GM23248 (cell line): ENCODE measurements at regions of chr12 and their contacts with region 1.

Region 1: DNA sequence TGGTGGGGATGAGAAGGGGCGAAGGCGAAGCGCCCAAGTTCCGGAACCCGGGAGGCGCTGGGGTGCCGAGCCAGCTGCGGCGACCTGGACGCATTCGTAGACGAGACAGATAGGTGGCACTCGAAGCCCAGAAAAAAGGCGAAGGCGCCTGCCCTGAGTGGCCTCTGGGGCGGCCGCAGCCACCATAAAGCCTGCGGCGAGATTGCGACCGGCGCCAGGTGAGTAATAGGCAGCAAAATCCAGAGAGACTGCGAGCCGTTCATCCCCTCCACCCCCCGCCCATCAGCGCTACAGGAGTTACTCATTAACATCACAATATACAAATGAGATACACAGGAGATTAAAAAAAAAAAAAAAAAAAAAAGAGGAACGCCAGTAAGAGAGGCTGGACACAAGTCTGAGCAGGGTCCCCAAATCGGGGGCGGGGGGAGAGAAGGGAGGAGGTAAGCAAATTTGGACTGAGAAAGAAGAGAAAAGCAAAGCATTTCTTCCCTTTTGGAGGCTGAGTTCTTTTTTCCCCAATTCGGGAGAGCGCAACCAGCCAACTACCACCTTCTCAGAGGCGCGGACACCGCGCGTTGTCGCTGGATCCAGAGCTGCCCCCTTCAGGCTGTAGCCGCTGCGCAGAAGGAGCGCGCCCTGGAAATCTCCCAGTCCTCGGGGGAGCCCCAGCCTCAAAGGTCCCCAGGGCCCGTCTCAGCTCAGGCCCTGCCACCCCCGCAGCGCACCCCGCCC is 15.7 kb downstream of the TBX3 start:
- DNase-seq: peak; percentile 96
- H3K4me3 ChIP-seq: peak overlapping the region; percentile 71
- H3K27ac ChIP-seq: peak overlapping the region; percentile 96
- H3K4me1 ChIP-seq: peaks cover 26% of the 10 kb centered on the region
- H3K27me3 ChIP-seq: no peaks in the 10 kb centered on the region

Region 2: GRCh38 chr12:114812858-114813761 is 144.8 kb after region 1 on chr12:
- in situ Hi-C with region 1: no loop called
- DNase-seq: no peak
- H3K4me3 ChIP-seq: no peak overlapping the region
- H3K27ac ChIP-seq: no peak overlapping the region
- H3K4me1 ChIP-seq: no peaks in the 10 kb centered on the region
- H3K27me3 ChIP-seq: no peaks in the 10 kb centered on the region

Region 3: DNA sequence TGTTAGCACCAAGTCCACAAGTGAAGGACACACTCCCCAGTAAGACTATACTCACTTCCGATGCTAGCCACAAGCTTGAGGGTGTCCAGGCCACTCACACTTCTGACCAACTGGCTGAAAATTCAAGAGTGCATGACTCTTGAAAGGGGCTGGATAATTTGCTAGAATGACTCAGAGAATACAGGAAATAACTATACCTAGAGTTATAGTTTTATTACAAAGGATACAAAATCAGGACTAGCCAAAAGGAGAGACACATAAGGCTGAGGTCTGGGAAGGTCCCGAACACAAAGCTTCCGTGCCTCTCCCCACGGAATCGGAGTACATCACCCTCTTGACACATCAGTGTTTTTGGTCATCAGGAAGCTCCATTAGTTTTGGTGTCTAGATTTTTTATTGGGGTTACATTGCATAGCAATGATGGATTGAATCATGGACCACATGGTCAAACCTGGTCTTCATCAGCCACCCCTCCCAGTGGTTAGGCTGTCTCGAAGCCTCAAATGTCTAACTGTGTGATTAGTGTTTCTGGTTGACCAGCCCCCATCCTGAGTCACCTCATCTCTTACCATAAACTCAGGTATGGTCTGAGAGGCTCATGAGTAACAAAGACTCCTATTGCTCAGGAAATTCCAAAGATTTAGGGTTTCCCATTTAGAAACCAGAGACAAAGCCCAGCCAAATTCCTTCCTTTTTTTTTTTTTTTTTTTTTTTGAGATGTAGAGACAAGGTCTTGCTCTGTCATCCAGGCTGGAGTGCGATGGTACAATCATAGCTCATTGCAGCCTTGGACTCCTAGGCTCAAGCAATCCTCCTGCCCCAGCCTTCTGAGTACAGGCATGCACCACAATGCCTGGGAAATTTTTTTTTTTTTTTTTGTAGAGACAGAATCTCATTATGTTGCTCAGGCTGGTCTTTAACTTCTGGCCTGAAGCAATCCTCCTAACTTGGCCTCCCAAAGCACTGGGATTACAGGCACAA is 487.6 kb after region 1 on chr12:
- in situ Hi-C with region 1: loop called (anchors 10 kb)
- DNase-seq: peak; percentile 95
- H3K4me3 ChIP-seq: no peak overlapping the region
- H3K27ac ChIP-seq: peak overlapping the region; percentile 79
- H3K4me1 ChIP-seq: peaks cover 15% of the 10 kb centered on the region
- H3K27me3 ChIP-seq: no peaks in the 10 kb centered on the region

Region 4: GRCh38 chr12:115763376-115763775 is 1095.1 kb after region 1 on chr12:
- in situ Hi-C with region 1: loop called (anchors 5 kb)
- DNase-seq: peak; percentile 67
- H3K4me3 ChIP-seq: no peak overlapping the region
- H3K27ac ChIP-seq: no peak overlapping the region
- H3K4me1 ChIP-seq: no peaks in the 10 kb centered on the region
- H3K27me3 ChIP-seq: no peaks in the 10 kb centered on the region; the same call in 1 of the 2 replicates